K562 (cell line): ENCODE measurements at regions of chr9 and their contacts with region 1.

Region 1: GRCh38 chr9:100426530-100427428 is at the start of gene MSANTD3:
- DNase-seq: peak; percentile 82 to 91 (median 90)
- ATAC-seq: peak; percentile 89
- H3K4me3 ChIP-seq: peak within 1 kb of the TSS; percentile 88
- H3K27ac ChIP-seq: peak within 1 kb of the TSS; percentile 99
- H3K4me1 ChIP-seq: peaks cover 7 to 27% of the 10 kb centered on the region in 2 experiments
- H3K27me3 ChIP-seq: no peaks in the 10 kb centered on the region
- CTCF ChIP-seq: peak; percentile 16 to 38 (median 23); a peak in 3 of 6 replicates
- EP300 ChIP-seq: peak; percentile 61; the same call in 1 of the 2 replicates
- POLR2A ChIP-seq: peak; percentile 79
- RAD21 ChIP-seq: no peak; a peak in 2 of 4 replicates
- polyA plus RNA-seq, gene MSANTD3: 9.4 to 9.6 TPM

Region 2: DNA sequence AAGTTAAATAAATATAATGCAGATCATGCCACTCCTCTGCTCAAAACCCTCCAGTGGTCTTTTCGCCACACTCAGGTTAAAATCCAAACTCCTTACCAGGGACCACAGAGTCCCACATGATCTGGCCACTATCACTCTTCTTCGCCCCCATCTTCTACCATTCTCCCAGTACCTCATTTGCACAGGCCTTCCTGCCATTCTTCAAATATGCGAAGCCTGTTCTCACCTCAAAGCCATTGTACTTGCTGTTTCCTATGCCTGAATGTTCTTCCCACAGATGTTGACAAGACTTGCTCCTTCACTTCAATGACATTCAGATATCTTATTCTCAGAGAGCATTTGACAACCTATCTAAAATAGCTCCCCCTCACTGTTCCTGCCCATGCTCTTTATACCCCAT is 84.9 kb before region 1 on chr9:
- CTCF ChIA-PET with region 1: no interaction called
- POLR2A ChIA-PET with region 1: interaction called, 4 read pairs
- in situ Hi-C with region 1: loop called (anchors 5 kb)
- intact Hi-C with region 1: no loop called
- DNase-seq: no peak
- ATAC-seq: no peak
- H3K4me3 ChIP-seq: no peak overlapping the region
- H3K27ac ChIP-seq: no peak overlapping the region
- H3K4me1 ChIP-seq: no peaks in the 10 kb centered on the region
- H3K27me3 ChIP-seq: no peaks in the 10 kb centered on the region
- CTCF ChIP-seq: no peak
- EP300 ChIP-seq: no peak
- POLR2A ChIP-seq: no peak
- RAD21 ChIP-seq: no peak

Region 3: GRCh38 chr9:100352727-100353505 is 73.9 kb before region 1 on chr9 and contains the start of gene TEX10:
- CTCF ChIA-PET with region 1: no interaction called
- POLR2A ChIA-PET with region 1: interaction called, 7 read pairs
- in situ Hi-C with region 1: no loop called
- intact Hi-C with region 1: loop called (anchors 5 kb)
- DNase-seq: peak; percentile 92 to 98 (median 98)
- ATAC-seq: peak; percentile 88
- H3K4me3 ChIP-seq: peak within 1 kb of the TSS; percentile 97
- H3K27ac ChIP-seq: peak within 1 kb of the TSS; percentile 97
- H3K4me1 ChIP-seq: peaks cover 7 to 27% of the 10 kb centered on the region in 2 experiments; a peak in 4 of 5 replicates
- H3K27me3 ChIP-seq: no peaks in the 10 kb centered on the region
- CTCF ChIP-seq: no peak
- EP300 ChIP-seq: peak; percentile 31; the same call in 1 of the 2 replicates
- POLR2A ChIP-seq: peak; percentile 88
- RAD21 ChIP-seq: no peak
- polyA plus RNA-seq, gene TEX10: 27.8 to 60.0 TPM

Region 4: DNA sequence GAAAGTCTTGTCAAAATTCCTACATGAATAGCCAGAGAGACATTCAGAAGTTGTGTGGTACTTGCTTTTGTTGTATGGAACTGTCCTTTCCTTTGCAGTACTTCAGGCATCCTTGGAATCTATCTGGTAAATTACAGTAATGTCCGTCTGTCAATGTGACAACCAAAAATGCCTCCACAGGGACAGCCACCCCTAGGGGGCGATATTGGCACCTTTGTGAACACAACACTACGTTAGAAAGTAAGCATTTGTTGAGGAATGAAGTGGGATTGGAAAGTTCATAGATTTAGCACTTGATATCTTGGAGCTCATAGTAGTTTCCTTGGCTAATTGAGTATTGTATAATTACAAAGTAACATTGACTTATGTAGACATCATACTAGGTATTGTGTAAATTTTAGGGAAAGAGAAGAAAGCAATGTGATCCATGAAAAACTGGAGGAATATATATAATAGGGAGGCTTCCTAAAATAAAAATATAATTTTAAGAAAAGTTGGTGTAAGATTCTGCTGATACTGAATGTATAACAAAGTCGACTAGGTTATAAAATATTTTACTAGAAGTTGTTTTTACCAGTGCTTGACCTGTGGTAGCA is 78.9 kb after region 1 on chr9:
- CTCF ChIA-PET with region 1: no interaction called
- POLR2A ChIA-PET with region 1: no interaction called
- in situ Hi-C with region 1: no loop called
- intact Hi-C with region 1: no loop called
- DNase-seq: peak; percentile 39 to 86 (median 54)
- ATAC-seq: peak; percentile 90
- H3K4me3 ChIP-seq: no peak overlapping the region
- H3K27ac ChIP-seq: no peak overlapping the region
- H3K4me1 ChIP-seq: no peaks in the 10 kb centered on the region
- H3K27me3 ChIP-seq: no peaks in the 10 kb centered on the region
- CTCF ChIP-seq: peak; percentile 75 to 91 (median 83)
- EP300 ChIP-seq: no peak
- POLR2A ChIP-seq: no peak
- RAD21 ChIP-seq: peak; percentile 64 to 77